ENCODE measurements at regions of chr10 and their contacts with region 1.

Region 1: GRCh38 chr10:32190890-32191491 is 134.8 kb upstream of the KIF5B start:
- DNase-seq: peak in 3 of 14 experiments; percentile 53 to 68 (median 64)
- ATAC-seq: peak; percentile 63
- H3K4me3 ChIP-seq: no peak overlapping the region
- H3K4me3 Mint-ChIP-seq: no peak overlapping the region
- H3K27ac ChIP-seq: no peak overlapping the region
- H3K27ac Mint-ChIP-seq: no peak overlapping the region
- H3K4me1 ChIP-seq: no peaks in the 10 kb centered on the region
- H3K4me1 Mint-ChIP-seq: peaks cover 4% of the 10 kb centered on the region
- H3K27me3 ChIP-seq: no peaks in the 10 kb centered on the region
- H3K27me3 Mint-ChIP-seq: peaks cover 5% of the 10 kb centered on the region
- CTCF ChIP-seq: peak; percentile 84

Region 2: GRCh38 chr10:32207544-32207943 is 16.6 kb after region 1 on chr10:
- CTCF ChIA-PET with region 1: interaction called, 6 read pairs
- POLR2A ChIA-PET with region 1: interaction called, 3 read pairs
- intact Hi-C with region 1: loop called in 1 of 2 experiments (anchors 2 kb)
- DNase-seq: peak; percentile 27 to 75 (median 46)
- ATAC-seq: peak; percentile 86
- H3K4me3 ChIP-seq: no peak overlapping the region
- H3K4me3 Mint-ChIP-seq: no peak overlapping the region
- H3K27ac ChIP-seq: no peak overlapping the region
- H3K27ac Mint-ChIP-seq: no peak overlapping the region
- H3K4me1 ChIP-seq: peaks cover 7% of the 10 kb centered on the region
- H3K4me1 Mint-ChIP-seq: peaks cover 5% of the 10 kb centered on the region
- H3K27me3 ChIP-seq: no peaks in the 10 kb centered on the region
- H3K27me3 Mint-ChIP-seq: no peaks in the 10 kb centered on the region
- CTCF ChIP-seq: peak; percentile 68

Region 3: GRCh38 chr10:33952692-33953348 is 1761.8 kb after region 1 on chr10:
- CTCF ChIA-PET with region 1: no interaction called
- POLR2A ChIA-PET with region 1: no interaction called
- intact Hi-C with region 1: no loop called
- DNase-seq: no peak
- ATAC-seq: no peak
- H3K4me3 ChIP-seq: no peak overlapping the region
- H3K4me3 Mint-ChIP-seq: no peak overlapping the region
- H3K27ac ChIP-seq: no peak overlapping the region
- H3K27ac Mint-ChIP-seq: no peak overlapping the region
- H3K4me1 ChIP-seq: no peaks in the 10 kb centered on the region
- H3K4me1 Mint-ChIP-seq: no peaks in the 10 kb centered on the region
- H3K27me3 ChIP-seq: no peaks in the 10 kb centered on the region
- H3K27me3 Mint-ChIP-seq: no peaks in the 10 kb centered on the region
- CTCF ChIP-seq: no peak

Region 4: DNA sequence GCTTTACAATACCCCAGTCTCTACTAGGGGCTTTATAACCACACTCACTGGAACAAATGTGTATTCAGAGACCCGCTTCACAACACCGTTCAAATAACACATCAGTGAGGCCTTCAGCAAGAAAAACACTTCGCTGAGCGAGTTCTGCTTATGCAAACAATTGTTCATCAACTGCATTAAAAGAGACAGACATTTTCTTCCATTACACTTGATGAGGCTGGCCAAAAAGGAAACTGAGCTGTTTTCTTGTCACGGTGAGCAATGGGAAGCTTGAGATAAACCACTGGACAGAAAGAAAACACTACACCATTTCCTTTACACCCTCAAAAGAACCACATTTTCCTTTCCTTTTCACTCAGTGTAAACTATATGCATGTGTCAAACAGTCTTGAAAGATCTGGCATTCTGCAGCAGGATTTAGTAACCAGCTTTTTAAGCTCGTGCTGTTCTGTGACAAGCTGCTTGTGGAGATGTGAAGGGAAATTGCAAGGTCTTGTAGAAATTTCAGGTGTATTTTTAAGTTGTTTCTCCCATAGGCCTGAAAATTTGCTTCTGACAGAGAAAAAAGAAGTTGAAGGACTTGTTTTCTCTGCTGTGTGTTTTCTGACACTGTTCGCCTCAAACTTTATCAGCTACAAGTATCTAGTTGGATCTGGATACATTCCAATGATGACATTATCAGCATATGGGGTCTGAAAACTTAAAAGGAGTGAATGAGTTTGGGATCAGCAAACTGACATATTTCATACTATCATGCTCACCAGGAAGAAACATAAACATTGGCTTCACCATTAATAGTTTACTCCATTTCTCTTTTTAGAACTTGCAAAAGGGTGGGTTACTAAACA is 1931.0 kb after region 1 on chr10:
- CTCF ChIA-PET with region 1: no interaction called
- POLR2A ChIA-PET with region 1: no interaction called
- intact Hi-C with region 1: no loop called
- DNase-seq: peak in 1 of 14 experiments; percentile 4
- ATAC-seq: no peak
- H3K4me3 ChIP-seq: no peak overlapping the region
- H3K4me3 Mint-ChIP-seq: no peak overlapping the region
- H3K27ac ChIP-seq: no peak overlapping the region
- H3K27ac Mint-ChIP-seq: no peak overlapping the region
- H3K4me1 ChIP-seq: no peaks in the 10 kb centered on the region
- H3K4me1 Mint-ChIP-seq: peaks cover 18% of the 10 kb centered on the region
- H3K27me3 ChIP-seq: no peaks in the 10 kb centered on the region
- H3K27me3 Mint-ChIP-seq: no peaks in the 10 kb centered on the region
- CTCF ChIP-seq: no peak